Activated CD8-positive, alpha-beta T cell treated with anti-CD3 and anti-CD28 coated beads for 36 hours (primary cell): ENCODE measurements at regions of chr19 and their contacts with region 1.

Region 1: DNA sequence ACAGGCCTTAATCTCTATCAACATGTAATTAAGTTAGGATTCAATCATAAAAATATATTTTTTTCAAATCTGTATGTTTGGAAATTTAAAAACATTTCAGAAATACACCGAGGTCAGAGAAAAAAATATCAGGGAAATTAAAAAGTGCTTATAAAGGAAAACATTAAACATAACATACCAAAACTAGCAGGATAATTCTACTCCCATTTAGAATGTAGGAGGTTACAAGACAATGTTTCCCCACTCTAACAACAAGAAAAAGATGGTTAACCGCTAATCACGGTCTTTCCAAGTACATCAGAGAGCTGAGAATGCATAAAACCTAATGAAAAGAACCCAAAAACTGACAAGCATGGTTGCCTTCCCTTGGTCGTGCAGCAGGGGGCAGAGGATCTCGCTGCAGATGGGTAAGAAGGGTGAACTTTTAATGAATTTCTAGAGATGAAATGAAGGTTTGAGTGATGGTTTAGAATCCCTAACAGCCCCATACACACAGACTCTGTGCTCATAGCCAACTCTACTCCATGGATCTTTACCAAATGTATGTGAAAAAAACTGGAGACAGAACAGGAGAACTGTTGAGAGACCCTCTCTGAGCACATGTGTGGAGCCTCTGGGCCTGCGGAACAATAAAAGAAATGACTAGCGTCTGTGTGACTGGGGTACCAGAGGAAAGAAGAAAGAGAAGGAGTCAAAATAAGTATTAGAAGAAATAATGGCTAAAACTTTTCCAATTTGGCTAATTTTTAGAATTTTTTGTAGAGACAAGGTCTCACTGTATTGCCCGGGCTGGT is 51.3 kb upstream of the LSM14A start:
- DNase-seq: peak; percentile 77
- ATAC-seq: peak; percentile 89
- H3K4me3 Mint-ChIP-seq: no peak overlapping the region
- H3K27ac Mint-ChIP-seq: no peak overlapping the region
- H3K4me1 Mint-ChIP-seq: peaks cover 18% of the 10 kb centered on the region
- H3K27me3 Mint-ChIP-seq: no peaks in the 10 kb centered on the region
- CTCF ChIP-seq: peak; percentile 78

Region 2: GRCh38 chr19:34041925-34042521 is 79.0 kb before region 1 on chr19:
- CTCF ChIA-PET with region 1: interaction called, 13 read pairs
- POLR2A ChIA-PET with region 1: no interaction called
- intact Hi-C with region 1: no loop called
- DNase-seq: peak; percentile 88
- ATAC-seq: peak; percentile 74
- H3K4me3 Mint-ChIP-seq: no peak overlapping the region
- H3K27ac Mint-ChIP-seq: no peak overlapping the region
- H3K4me1 Mint-ChIP-seq: no peaks in the 10 kb centered on the region
- H3K27me3 Mint-ChIP-seq: peaks cover 19% of the 10 kb centered on the region
- CTCF ChIP-seq: peak; percentile 97

Region 3: GRCh38 chr19:34096020-34096915 is 24.8 kb before region 1 on chr19:
- CTCF ChIA-PET with region 1: interaction called, 11 read pairs
- POLR2A ChIA-PET with region 1: no interaction called
- intact Hi-C with region 1: no loop called
- DNase-seq: no peak
- ATAC-seq: no peak
- H3K4me3 Mint-ChIP-seq: no peak overlapping the region
- H3K27ac Mint-ChIP-seq: no peak overlapping the region
- H3K4me1 Mint-ChIP-seq: no peaks in the 10 kb centered on the region
- H3K27me3 Mint-ChIP-seq: peaks cover 11% of the 10 kb centered on the region
- CTCF ChIP-seq: peak; percentile 57

Region 4: GRCh38 chr19:34134190-34135053 is 13.4 kb after region 1 on chr19:
- CTCF ChIA-PET with region 1: interaction called, 15 read pairs
- POLR2A ChIA-PET with region 1: interaction called, 3 read pairs
- intact Hi-C with region 1: no loop called
- DNase-seq: peak; percentile 93
- ATAC-seq: peak; percentile 98
- H3K4me3 Mint-ChIP-seq: peak overlapping the region; percentile 91
- H3K27ac Mint-ChIP-seq: peak overlapping the region; percentile 94
- H3K4me1 Mint-ChIP-seq: peaks cover 2% of the 10 kb centered on the region
- H3K27me3 Mint-ChIP-seq: no peaks in the 10 kb centered on the region
- CTCF ChIP-seq: no peak

Region 5: DNA sequence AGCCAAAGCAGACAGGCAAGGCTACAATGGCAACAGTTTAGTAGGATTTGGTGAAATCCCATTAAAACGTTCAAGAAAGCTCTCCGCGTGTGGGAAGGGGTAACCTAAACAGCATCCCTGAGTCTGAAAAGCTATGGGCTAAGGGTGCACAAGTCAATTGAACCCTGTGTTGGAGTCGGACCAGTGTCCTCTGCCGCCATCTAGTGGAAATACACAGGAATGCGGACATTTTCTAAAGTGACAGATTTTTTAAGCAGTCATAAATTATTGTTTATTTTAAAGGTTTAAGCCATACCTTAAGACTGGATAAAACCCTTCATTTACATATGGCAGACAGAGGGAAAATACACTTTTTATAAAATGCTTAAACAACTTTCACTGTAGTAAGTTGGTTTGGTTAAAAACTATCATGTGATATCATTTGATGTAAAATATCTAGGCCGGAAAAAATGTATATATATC is 24.7 kb after region 1 on chr19:
- CTCF ChIA-PET with region 1: interaction called, 25 read pairs
- POLR2A ChIA-PET with region 1: no interaction called
- intact Hi-C with region 1: no loop called
- DNase-seq: peak; percentile 72
- ATAC-seq: peak; percentile 74
- H3K4me3 Mint-ChIP-seq: no peak overlapping the region
- H3K27ac Mint-ChIP-seq: no peak overlapping the region
- H3K4me1 Mint-ChIP-seq: no peaks in the 10 kb centered on the region
- H3K27me3 Mint-ChIP-seq: no peaks in the 10 kb centered on the region
- CTCF ChIP-seq: peak; percentile 80

Region 6: GRCh38 chr19:34232566-34233481 is 111.8 kb after region 1 on chr19:
- CTCF ChIA-PET with region 1: no interaction called
- POLR2A ChIA-PET with region 1: no interaction called
- intact Hi-C with region 1: no loop called
- DNase-seq: peak; percentile 44
- ATAC-seq: peak; percentile 89
- H3K4me3 Mint-ChIP-seq: peak overlapping the region; percentile 14
- H3K27ac Mint-ChIP-seq: peak overlapping the region; percentile 79
- H3K4me1 Mint-ChIP-seq: peaks cover 20% of the 10 kb centered on the region
- H3K27me3 Mint-ChIP-seq: no peaks in the 10 kb centered on the region
- CTCF ChIP-seq: no peak